HAP-1 (cell line): ENCODE measurements at regions of chr17 and their contacts with region 1.

Region 1: DNA sequence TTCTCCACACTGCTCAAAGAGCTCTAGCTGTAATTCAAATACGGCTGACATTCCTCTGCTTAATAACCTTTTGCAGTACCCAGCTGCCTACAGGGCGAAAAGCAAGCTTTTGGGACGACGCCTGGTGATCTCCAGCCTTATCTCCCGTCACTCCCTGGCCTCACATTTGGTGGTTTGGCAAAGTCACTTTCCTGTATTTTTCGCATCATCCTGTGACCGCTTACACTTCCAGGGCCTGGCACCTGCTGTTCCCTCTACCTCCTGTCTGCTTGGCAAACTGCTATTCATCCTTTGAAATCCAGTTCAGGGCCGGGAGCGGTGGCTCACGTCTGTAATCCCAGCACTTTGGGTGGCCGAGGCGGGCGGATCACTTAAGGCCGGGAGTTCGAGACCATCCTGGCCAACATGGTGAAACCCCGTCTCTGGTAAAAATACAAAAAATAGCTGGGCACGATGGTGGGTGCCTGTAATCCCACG is 2.7 kb upstream of the BHLHA9 start:
- DNase-seq: peak in 1 of 2 experiments; percentile 26
- H3K4me3 ChIP-seq: peak overlapping the region; percentile 58
- H3K4me1 ChIP-seq: no peaks in the 10 kb centered on the region
- H3K27me3 ChIP-seq: no peaks in the 10 kb centered on the region

Region 2: GRCh38 chr17:1323336-1323735 is 55.8 kb after region 1 on chr17:
- in situ Hi-C with region 1: loop called (anchors 5 kb)
- DNase-seq: no peak
- H3K4me3 ChIP-seq: no peak overlapping the region
- H3K4me1 ChIP-seq: no peaks in the 10 kb centered on the region
- H3K27me3 ChIP-seq: peaks cover 3% of the 10 kb centered on the region; the same call in 1 of the 2 replicates

Region 3: DNA sequence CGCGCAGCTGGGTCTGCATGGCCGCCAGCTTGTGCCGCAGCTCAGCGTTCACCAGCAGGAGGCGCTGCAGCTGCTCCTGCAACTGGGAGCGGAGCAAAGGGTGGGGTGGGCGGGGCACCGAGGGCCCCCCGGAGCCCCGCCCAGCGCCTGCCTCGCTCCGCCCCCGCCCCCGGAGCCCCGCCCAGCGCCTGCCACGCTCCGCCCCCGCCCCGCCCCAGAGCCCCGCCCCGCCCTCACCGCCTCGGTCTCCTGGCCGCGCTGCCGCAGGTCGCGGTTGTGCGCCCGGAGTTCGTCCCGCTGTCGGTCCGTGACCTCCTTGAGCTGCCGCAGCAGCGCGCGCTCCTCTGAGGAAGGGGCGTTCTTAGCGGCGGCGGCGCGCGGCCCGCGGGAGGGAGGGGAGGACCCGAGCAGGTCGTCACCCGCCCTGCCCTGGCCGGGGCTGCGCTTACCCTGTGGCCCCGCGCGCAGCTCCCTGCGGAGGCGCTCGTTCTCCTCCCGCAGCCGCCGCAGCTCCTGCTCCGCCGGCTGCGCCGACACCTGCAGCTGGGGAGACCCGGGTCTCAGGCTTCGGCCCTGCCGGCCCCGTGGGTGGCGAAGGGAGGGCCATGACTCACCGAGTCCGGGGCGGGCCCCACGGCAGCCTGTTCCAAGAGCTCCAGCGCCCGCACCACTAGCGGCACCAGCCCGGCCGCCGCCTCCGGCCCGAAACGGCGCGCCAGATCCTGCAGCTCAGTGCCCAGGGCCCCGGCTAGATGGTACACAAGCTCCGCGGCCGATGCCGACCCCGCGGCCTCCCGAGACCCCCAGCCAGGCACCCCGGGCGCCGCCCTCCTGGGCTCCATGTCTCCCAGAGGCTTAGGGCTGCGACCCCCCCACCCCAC is 381.7 kb after region 1 on chr17:
- in situ Hi-C with region 1: loop called (anchors 10 kb)
- DNase-seq: peak; percentile 86 to 95
- H3K4me3 ChIP-seq: peak overlapping the region; percentile 37
- H3K4me1 ChIP-seq: peaks cover 7% of the 10 kb centered on the region
- H3K27me3 ChIP-seq: no peaks in the 10 kb centered on the region